Common myeloid progenitor, CD34-positive (primary cell): ENCODE measurements at regions of chr11 and their contacts with region 1.

Region 1: GRCh38 chr11:101848262-101848661 is 66.5 kb upstream of the CEP126 start:
- DNase-seq: peak; percentile 6 to 42 (median 33)
- H3K4me3 ChIP-seq: no peak overlapping the region
- H3K27ac ChIP-seq: no peak overlapping the region
- H3K4me1 ChIP-seq: no peaks in the 10 kb centered on the region
- H3K27me3 ChIP-seq: no peaks in the 10 kb centered on the region

Region 2: GRCh38 chr11:101456812-101457211 is 391.4 kb before region 1 on chr11:
- CTCF ChIA-PET with region 1: interaction called, 46 read pairs
- POLR2A ChIA-PET with region 1: no interaction called
- DNase-seq: peak in 2 of 3 donors; percentile 35 to 38
- H3K4me3 ChIP-seq: no peak overlapping the region
- H3K27ac ChIP-seq: no peak overlapping the region
- H3K4me1 ChIP-seq: no peaks in the 10 kb centered on the region
- H3K27me3 ChIP-seq: no peaks in the 10 kb centered on the region